Lower leg skin (tissue), 4 donors: ENCODE measurements at regions of chr11 and their contacts with region 1.

Region 1: GRCh38 chr11:4187055-4187988 is 92.7 kb downstream of the RRM1 start:
- DNase-seq: peak; percentile 86 to 98
- H3K4me3 ChIP-seq: peak overlapping the region; percentile 37
- CTCF ChIP-seq: peak in 1 of 3 donors; percentile 35
- POLR2A ChIP-seq: no peak

Region 2: DNA sequence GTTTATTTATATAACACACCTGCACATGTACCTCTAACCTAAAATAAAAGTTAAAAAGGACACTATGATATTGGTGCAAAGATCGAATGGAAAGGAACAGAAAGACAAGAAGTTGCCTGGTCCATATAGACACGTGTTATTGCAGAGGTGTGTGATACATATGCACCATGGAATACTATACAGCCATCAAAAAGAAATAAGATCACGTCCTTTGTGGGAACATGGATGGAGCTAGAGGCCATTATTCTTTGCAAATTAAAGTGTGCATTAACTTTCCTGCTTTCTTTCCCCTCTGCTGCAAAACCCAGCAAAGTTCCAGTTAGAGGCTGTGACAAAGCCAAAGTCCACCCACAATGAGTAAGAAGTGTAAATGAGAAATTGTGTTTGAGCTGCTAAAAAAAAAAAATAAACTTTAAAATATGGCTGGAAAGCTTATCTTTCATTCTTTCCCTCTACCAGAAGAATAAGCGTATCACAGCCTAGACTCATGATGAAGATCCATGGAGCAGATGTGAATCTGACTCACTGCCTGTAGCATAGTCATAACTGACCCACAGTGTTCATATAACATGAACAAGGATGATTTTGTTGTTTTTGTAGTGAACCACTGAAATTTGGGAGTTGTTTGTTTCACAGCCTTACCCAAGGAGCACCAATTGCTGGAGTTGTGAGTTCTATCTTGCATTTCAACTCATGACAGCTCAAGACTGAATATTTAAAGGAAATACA is 304.7 kb after region 1 on chr11:
- intact Hi-C with region 1: loop called (anchors 2 kb)
- DNase-seq: no peak
- H3K4me3 ChIP-seq: no peak overlapping the region
- CTCF ChIP-seq: no peak
- POLR2A ChIP-seq: no peak

Region 3: DNA sequence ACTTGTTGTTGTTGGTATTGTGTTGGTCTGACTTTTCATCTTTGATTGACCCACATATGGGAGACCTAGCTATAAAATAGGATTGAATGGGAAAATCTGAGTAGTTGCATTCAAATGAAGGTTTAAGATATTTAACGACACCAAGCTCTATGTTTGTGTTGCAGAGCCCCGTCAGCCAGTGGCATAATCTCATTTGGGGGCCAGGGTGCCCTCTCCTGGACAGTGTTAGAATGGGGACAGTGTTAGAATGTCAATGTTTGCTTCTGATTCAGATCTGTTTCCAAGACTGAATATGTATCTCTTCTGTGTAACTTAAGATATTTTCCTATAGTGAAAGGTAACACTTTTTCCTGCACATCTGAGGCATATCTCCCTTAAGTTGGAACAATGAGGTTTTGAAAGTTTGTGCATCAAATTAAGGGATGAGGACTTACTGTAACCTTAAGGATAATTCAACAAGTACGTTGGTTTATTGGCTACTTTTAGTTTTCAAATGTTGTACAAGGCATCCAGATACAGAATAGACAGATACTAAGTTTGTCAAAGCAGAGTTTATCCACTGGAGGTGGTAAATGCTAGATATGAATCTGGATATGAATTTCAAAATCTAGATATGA is 352.4 kb after region 1 on chr11:
- intact Hi-C with region 1: loop called (anchors 5 kb)
- DNase-seq: peak; percentile 34 to 88
- H3K4me3 ChIP-seq: no peak overlapping the region
- CTCF ChIP-seq: no peak
- POLR2A ChIP-seq: no peak

Region 4: GRCh38 chr11:5004424-5005274 is 817.3 kb after region 1 on chr11:
- intact Hi-C with region 1: loop called (anchors 5 kb)
- DNase-seq: no peak
- H3K4me3 ChIP-seq: no peak overlapping the region
- CTCF ChIP-seq: no peak
- POLR2A ChIP-seq: no peak